ENCODE measurements at regions of chr22 and their contacts with region 1.

Region 1: GRCh38 chr22:17171313-17172171 is 12.5 kb upstream of the HDHD5 start:
- DNase-seq: peak; percentile 50 to 89 (median 68)
- ATAC-seq: peak; percentile 89
- H3K4me3 ChIP-seq: peak overlapping the region; percentile 73
- H3K4me3 Mint-ChIP-seq: peak overlapping the region; percentile 92
- H3K27ac ChIP-seq: peak overlapping the region in 1 of 2 donors; percentile 36
- H3K27ac Mint-ChIP-seq: peak overlapping the region; percentile 80
- H3K4me1 ChIP-seq: peaks cover 13% of the 10 kb centered on the region
- H3K4me1 Mint-ChIP-seq: peaks cover 6% of the 10 kb centered on the region
- H3K27me3 ChIP-seq: no peaks in the 10 kb centered on the region
- H3K27me3 Mint-ChIP-seq: no peaks in the 10 kb centered on the region
- CTCF ChIP-seq: peak; percentile 69

Region 2: GRCh38 chr22:17077255-17077654 is 94.3 kb before region 1 on chr22:
- CTCF ChIA-PET with region 1: interaction called, 56 read pairs
- POLR2A ChIA-PET with region 1: interaction called, 15 read pairs
- intact Hi-C with region 1: loop called (anchors 1 kb)
- DNase-seq: no peak
- ATAC-seq: no peak
- H3K4me3 ChIP-seq: no peak overlapping the region
- H3K4me3 Mint-ChIP-seq: no peak overlapping the region
- H3K27ac ChIP-seq: no peak overlapping the region
- H3K27ac Mint-ChIP-seq: no peak overlapping the region
- H3K4me1 ChIP-seq: peaks cover 11% of the 10 kb centered on the region
- H3K4me1 Mint-ChIP-seq: peaks cover 17% of the 10 kb centered on the region
- H3K27me3 ChIP-seq: no peaks in the 10 kb centered on the region
- H3K27me3 Mint-ChIP-seq: no peaks in the 10 kb centered on the region
- CTCF ChIP-seq: no peak

Region 3: GRCh38 chr22:17106785-17107546 is 64.6 kb before region 1 on chr22:
- CTCF ChIA-PET with region 1: interaction called, 6 read pairs
- POLR2A ChIA-PET with region 1: interaction called, 3 read pairs
- intact Hi-C with region 1: loop called in 1 of 2 experiments (anchors 2 kb)
- DNase-seq: peak in 5 of 14 experiments; percentile 26 to 56 (median 46)
- ATAC-seq: peak; percentile 74
- H3K4me3 ChIP-seq: peak overlapping the region; percentile 11
- H3K4me3 Mint-ChIP-seq: peak overlapping the region; percentile 82
- H3K27ac ChIP-seq: peak overlapping the region; percentile 36 to 66
- H3K27ac Mint-ChIP-seq: peak overlapping the region; percentile 90
- H3K4me1 ChIP-seq: peaks cover 48% of the 10 kb centered on the region
- H3K4me1 Mint-ChIP-seq: peaks cover 65% of the 10 kb centered on the region
- H3K27me3 ChIP-seq: no peaks in the 10 kb centered on the region
- H3K27me3 Mint-ChIP-seq: no peaks in the 10 kb centered on the region
- CTCF ChIP-seq: no peak

Region 4: DNA sequence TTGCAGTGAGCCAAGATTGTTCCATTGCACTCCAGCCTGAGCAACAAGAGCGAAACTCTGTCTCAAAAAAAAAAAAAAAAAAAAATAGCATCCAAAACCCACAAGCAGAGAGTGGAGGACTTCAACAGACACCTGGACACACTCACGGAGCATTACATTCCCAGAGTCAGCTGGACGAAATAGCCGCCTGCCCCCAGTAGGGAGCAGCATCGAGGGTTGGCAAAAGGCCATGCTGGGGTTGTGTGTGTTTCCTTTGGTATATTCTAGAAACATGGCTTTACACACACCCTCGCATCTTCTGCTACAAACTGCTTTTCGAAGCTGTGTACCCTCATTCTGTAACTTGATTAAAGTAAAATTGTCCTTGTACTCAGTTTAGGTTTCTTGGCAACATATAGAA is 42.4 kb after region 1 on chr22:
- CTCF ChIA-PET with region 1: interaction called, 15 read pairs
- POLR2A ChIA-PET with region 1: interaction called, 3 read pairs
- intact Hi-C with region 1: no loop called
- DNase-seq: peak; percentile 31 to 77 (median 58)
- ATAC-seq: peak; percentile 40
- H3K4me3 ChIP-seq: no peak overlapping the region
- H3K4me3 Mint-ChIP-seq: peak overlapping the region; percentile 76
- H3K27ac ChIP-seq: peak overlapping the region in 1 of 2 donors; percentile 31
- H3K27ac Mint-ChIP-seq: peak overlapping the region; percentile 86
- H3K4me1 ChIP-seq: peaks cover 40% of the 10 kb centered on the region
- H3K4me1 Mint-ChIP-seq: peaks cover 65% of the 10 kb centered on the region
- H3K27me3 ChIP-seq: no peaks in the 10 kb centered on the region
- H3K27me3 Mint-ChIP-seq: no peaks in the 10 kb centered on the region
- CTCF ChIP-seq: peak; percentile 37

Region 5: GRCh38 chr22:17638432-17639246 is 467.1 kb after region 1 on chr22 and contains the start of gene BCL2L13:
- CTCF ChIA-PET with region 1: no interaction called
- POLR2A ChIA-PET with region 1: no interaction called
- intact Hi-C with region 1: loop called in 1 of 2 experiments (anchors 5 kb)
- DNase-seq: peak; percentile 77 to 94 (median 84)
- ATAC-seq: peak; percentile 90
- H3K4me3 ChIP-seq: peak within 1 kb of the TSS; percentile 85
- H3K4me3 Mint-ChIP-seq: peak within 1 kb of the TSS; percentile 92
- H3K27ac ChIP-seq: peak within 1 kb of the TSS; percentile 98 to 99
- H3K27ac Mint-ChIP-seq: peak within 1 kb of the TSS; percentile 96
- H3K4me1 ChIP-seq: peaks cover 24% of the 10 kb centered on the region
- H3K4me1 Mint-ChIP-seq: peaks cover 31% of the 10 kb centered on the region
- H3K27me3 ChIP-seq: no peaks in the 10 kb centered on the region
- H3K27me3 Mint-ChIP-seq: no peaks in the 10 kb centered on the region
- CTCF ChIP-seq: no peak
- total RNA-seq, gene BCL2L13: 8.1 to 10.0 TPM

Measured in CD4-positive, alpha-beta T cell (primary cell).